ENCODE measurements at regions of chr1 and their contacts with region 1.

Region 1: GRCh38 chr1:112614460-112615065 is 4.4 kb downstream of the ST7L start:
- DNase-seq: no peak
- H3K4me3 ChIP-seq: no peak overlapping the region
- CTCF ChIP-seq: peak; percentile 62

Region 2: DNA sequence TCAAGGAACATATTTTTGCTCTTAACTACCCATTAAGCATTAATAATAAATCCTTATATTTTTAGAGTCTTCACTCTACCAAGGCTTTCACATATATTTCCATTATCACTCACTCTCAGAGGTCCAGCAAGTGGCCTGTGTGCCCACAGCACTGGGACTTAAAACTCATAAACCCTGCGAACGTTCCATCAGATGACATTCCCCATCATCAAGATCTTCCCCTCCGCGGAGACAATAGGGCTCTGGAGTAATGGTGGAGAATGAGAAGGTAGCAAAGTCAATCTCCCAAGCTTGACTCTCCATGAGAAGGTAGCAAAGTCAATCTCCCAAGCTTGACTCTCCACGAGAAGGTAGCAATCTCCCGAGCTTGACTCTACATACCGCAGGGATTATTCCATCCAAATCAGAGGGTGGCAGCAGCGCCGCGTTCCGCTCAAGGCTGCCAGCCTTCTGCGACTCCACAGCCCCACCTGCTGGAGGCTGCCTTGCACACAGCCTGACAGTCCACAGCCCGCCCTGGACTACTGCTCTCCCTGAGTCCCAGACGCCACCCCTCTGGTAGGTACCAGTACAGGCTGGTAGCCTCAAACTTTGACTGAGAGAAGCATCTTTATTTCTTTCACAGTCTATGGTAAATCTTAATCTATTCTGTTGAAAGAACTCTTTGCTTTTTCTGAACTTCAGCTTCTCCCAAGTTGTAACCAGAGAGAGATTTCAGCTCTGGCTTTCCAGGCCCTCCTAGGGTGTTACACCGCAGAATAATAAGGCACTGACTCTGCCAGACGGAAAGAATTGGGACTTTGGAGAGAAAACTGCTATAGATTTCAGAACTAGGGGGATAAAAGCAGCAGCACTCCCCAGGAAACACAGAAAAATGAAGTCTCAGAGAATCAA is 244.9 kb before region 1 on chr1:
- CTCF ChIA-PET with region 1: interaction called, 16 read pairs
- POLR2A ChIA-PET with region 1: no interaction called
- DNase-seq: no peak
- H3K4me3 ChIP-seq: no peak overlapping the region
- CTCF ChIP-seq: peak; percentile 99

Region 3: GRCh38 chr1:112406771-112407170 is 207.8 kb before region 1 on chr1:
- CTCF ChIA-PET with region 1: no interaction called
- POLR2A ChIA-PET with region 1: no interaction called
- DNase-seq: no peak
- H3K4me3 ChIP-seq: no peak overlapping the region
- CTCF ChIP-seq: no peak

Region 4: DNA sequence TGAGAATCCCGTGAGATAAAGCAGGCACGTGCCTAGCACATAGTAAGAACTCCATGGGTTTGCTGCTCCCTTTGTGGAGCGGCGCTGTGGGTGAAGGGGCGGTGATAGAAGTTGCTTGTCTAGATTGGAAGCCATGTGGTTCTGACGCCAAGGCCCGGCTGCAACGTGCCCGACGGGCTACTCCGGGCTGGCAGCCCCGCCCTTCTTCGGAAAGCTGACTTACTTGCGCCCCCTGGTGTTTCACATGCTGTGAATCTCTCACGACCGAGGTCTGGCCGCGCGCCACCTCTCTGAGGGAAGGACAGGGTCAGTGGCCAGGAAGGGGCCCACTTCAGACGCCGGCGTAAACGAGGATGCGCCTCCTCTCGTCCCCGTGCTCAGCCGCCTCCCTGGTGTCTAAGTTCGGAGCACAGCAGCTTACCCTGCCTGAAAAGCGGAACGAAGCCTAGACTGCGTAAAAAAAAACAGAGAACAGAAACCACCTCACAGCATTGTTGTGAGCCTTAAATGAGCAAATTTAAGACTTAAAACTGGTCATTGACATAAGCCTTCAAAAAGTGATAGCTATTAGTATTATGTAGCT is 148.4 kb before region 1 on chr1:
- CTCF ChIA-PET with region 1: interaction called, 30 read pairs
- POLR2A ChIA-PET with region 1: no interaction called
- DNase-seq: peak; percentile 74
- H3K4me3 ChIP-seq: peak overlapping the region; percentile 46
- CTCF ChIP-seq: peak; percentile 88

Region 5: GRCh38 chr1:112515311-112516009 is 99.1 kb before region 1 on chr1:
- CTCF ChIA-PET with region 1: interaction called, 11 read pairs
- POLR2A ChIA-PET with region 1: no interaction called
- DNase-seq: no peak
- H3K4me3 ChIP-seq: no peak overlapping the region
- CTCF ChIP-seq: no peak

Region 6: DNA sequence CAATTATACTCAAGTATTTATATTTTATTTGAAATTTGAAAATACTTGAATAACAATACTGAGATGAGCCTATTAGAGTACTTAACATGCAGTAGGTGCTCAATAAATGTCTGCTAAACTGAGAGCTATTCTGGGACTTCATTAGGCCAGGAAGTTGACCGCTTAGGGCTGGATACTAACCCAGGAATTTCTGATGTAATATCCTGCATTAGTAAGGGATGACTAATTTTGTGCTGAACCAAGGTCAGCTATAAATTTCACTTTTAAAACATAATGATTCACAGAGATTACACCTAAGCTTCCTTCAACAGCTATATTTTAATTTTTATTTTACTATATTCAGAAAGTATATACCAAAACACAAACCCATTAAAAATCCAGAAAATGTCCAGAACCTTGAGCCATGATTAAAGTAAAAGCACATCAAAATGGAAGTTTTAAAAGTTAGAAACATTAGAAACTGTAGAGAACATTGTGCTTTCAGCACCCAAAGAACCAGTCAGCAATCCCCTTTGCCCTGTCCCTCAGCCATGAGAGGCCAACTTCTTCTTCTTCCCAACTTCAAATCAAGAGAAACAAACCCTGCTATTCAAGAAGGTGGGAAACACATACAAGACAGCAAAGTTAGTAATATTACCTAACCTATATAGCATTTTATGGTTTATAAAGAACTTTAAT is 70.4 kb before region 1 on chr1:
- CTCF ChIA-PET with region 1: interaction called, 10 read pairs
- POLR2A ChIA-PET with region 1: no interaction called
- DNase-seq: peak; percentile 87
- H3K4me3 ChIP-seq: no peak overlapping the region
- CTCF ChIP-seq: no peak

Region 7: DNA sequence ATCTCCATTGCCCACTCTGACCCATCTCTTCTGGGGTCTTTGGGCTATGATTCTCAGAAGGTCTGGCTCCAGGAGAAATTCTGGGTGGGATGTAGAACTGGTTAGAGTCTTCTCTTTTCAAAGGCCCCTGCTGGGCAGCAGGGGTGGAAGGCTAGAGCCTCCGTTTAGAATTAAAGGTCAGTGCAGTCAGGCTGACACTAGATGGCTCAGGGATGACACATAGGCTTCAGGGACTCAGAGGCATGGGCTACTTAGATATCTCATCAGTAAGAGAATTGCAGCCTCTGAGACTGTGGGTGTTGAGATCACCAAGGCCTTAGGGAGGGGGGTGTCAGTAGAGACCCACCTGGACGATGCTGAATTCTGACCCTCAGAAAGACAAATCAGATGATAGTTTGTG is 113.2 kb after region 1 on chr1:
- CTCF ChIA-PET with region 1: no interaction called
- POLR2A ChIA-PET with region 1: no interaction called
- DNase-seq: no peak
- H3K4me3 ChIP-seq: no peak overlapping the region
- CTCF ChIP-seq: no peak

Region 8: GRCh38 chr1:112866151-112866550 is 251.6 kb after region 1 on chr1:
- CTCF ChIA-PET with region 1: no interaction called
- POLR2A ChIA-PET with region 1: no interaction called
- DNase-seq: no peak
- H3K4me3 ChIP-seq: no peak overlapping the region
- CTCF ChIP-seq: no peak